ENCODE measurements at regions of chr3 and their contacts with region 1.

Region 1: GRCh38 chr3:175526609-175527280 is 667.6 kb downstream of the NAALADL2 start:
- DNase-seq: no peak
- ATAC-seq: no peak
- H3K4me3 ChIP-seq: peak overlapping the region; percentile 37
- H3K27ac ChIP-seq: no peak overlapping the region
- H3K4me1 ChIP-seq: no peaks in the 10 kb centered on the region
- H3K27me3 ChIP-seq: no peaks in the 10 kb centered on the region
- CTCF ChIP-seq: no peak

Region 2: DNA sequence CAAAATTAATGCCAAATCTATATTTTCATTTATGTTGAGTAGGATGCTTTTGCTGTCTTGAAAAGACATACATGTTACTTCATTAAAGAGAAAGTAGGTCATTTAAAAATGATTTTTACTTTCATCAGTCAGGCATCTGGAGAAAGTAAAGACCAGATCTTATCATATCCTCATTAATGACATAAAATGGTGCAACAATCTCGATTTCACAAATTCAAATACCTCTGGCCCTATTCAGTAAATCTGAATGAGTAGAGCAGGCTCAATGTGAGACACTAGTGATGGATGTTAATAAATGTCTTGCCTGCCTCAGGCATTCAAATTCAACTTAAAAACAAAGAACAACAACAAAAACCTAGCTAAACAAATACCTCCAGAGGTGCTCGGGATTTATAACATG is 46.5 kb after region 1 on chr3:
- intact Hi-C with region 1: loop called in 1 of 2 experiments (anchors 2 kb)
- DNase-seq: no peak
- ATAC-seq: no peak
- H3K4me3 ChIP-seq: no peak overlapping the region
- H3K27ac ChIP-seq: no peak overlapping the region
- H3K4me1 ChIP-seq: no peaks in the 10 kb centered on the region
- H3K27me3 ChIP-seq: no peaks in the 10 kb centered on the region
- CTCF ChIP-seq: no peak

Region 3: GRCh38 chr3:175585898-175586297 is 59.2 kb after region 1 on chr3:
- intact Hi-C with region 1: no loop called
- DNase-seq: no peak
- ATAC-seq: no peak
- H3K4me3 ChIP-seq: no peak overlapping the region
- H3K27ac ChIP-seq: no peak overlapping the region
- H3K4me1 ChIP-seq: no peaks in the 10 kb centered on the region
- H3K27me3 ChIP-seq: no peaks in the 10 kb centered on the region
- CTCF ChIP-seq: no peak

Measured in psoas muscle (tissue), 8 donors.